BJ (cell line): ENCODE measurements at regions of chr9 and their contacts with region 1.

Region 1: GRCh38 chr9:93827545-93828330 is 127.4 kb downstream of the BARX1 start:
- DNase-seq: no peak
- H3K4me3 ChIP-seq: peak overlapping the region; percentile 23
- H3K27me3 ChIP-seq: no peaks in the 10 kb centered on the region; the same call in 1 of the 2 replicates
- CTCF ChIP-seq: peak; percentile 86

Region 2: GRCh38 chr9:93814077-93814956 is 13.4 kb before region 1 on chr9:
- CTCF ChIA-PET with region 1: interaction called, 31 read pairs
- POLR2A ChIA-PET with region 1: no interaction called
- DNase-seq: no peak
- H3K4me3 ChIP-seq: no peak overlapping the region
- H3K27me3 ChIP-seq: no peaks in the 10 kb centered on the region
- CTCF ChIP-seq: no peak

Region 3: GRCh38 chr9:93846349-93846748 is 18.6 kb after region 1 on chr9:
- CTCF ChIA-PET with region 1: interaction called, 11 read pairs
- POLR2A ChIA-PET with region 1: no interaction called
- DNase-seq: no peak
- H3K4me3 ChIP-seq: no peak overlapping the region
- H3K27me3 ChIP-seq: no peaks in the 10 kb centered on the region
- CTCF ChIP-seq: no peak